ENCODE measurements at regions of chr12 and their contacts with region 1.

Region 1: GRCh38 chr12:56007564-56008559 is 10.8 kb downstream of the SUOX start:
- DNase-seq: peak; percentile 71
- H3K4me3 Mint-ChIP-seq: peak overlapping the region; percentile 79
- H3K27ac Mint-ChIP-seq: peak overlapping the region; percentile 69
- H3K4me1 Mint-ChIP-seq: peaks cover 24% of the 10 kb centered on the region
- H3K27me3 Mint-ChIP-seq: no peaks in the 10 kb centered on the region

Region 2: GRCh38 chr12:55966408-55967281 is 41.2 kb before region 1 on chr12 and contains the start of gene CDK2:
- CTCF ChIA-PET with region 1: no interaction called
- POLR2A ChIA-PET with region 1: no interaction called
- intact Hi-C with region 1: no loop called
- DNase-seq: peak; percentile 94
- H3K4me3 Mint-ChIP-seq: peak within 1 kb of the TSS; percentile 85
- H3K27ac Mint-ChIP-seq: peak within 1 kb of the TSS; percentile 80
- H3K4me1 Mint-ChIP-seq: peaks cover 21% of the 10 kb centered on the region
- H3K27me3 Mint-ChIP-seq: no peaks in the 10 kb centered on the region
- total RNA-seq, gene CDK2: 121 to 127 TPM

Region 3: GRCh38 chr12:56020423-56021184 is 12.7 kb after region 1 on chr12 and contains the start of gene IKZF4:
- CTCF ChIA-PET with region 1: interaction called, 4 read pairs
- POLR2A ChIA-PET with region 1: no interaction called
- intact Hi-C with region 1: loop called (anchors 1 kb)
- DNase-seq: peak; percentile 41
- H3K4me3 Mint-ChIP-seq: peak within 1 kb of the TSS; percentile 83
- H3K27ac Mint-ChIP-seq: peak within 1 kb of the TSS; percentile 80
- H3K4me1 Mint-ChIP-seq: peaks cover 32% of the 10 kb centered on the region
- H3K27me3 Mint-ChIP-seq: no peaks in the 10 kb centered on the region
- total RNA-seq, gene IKZF4: 14.4 to 15.1 TPM

Region 4: GRCh38 chr12:56425193-56425592 is 417.3 kb after region 1 on chr12:
- CTCF ChIA-PET with region 1: no interaction called
- POLR2A ChIA-PET with region 1: no interaction called
- intact Hi-C with region 1: no loop called
- DNase-seq: no peak
- H3K4me3 Mint-ChIP-seq: no peak overlapping the region
- H3K27ac Mint-ChIP-seq: no peak overlapping the region
- H3K4me1 Mint-ChIP-seq: peaks cover 4% of the 10 kb centered on the region
- H3K27me3 Mint-ChIP-seq: no peaks in the 10 kb centered on the region